ENCODE measurements at regions of chr7 and their contacts with region 1.

Region 1: DNA sequence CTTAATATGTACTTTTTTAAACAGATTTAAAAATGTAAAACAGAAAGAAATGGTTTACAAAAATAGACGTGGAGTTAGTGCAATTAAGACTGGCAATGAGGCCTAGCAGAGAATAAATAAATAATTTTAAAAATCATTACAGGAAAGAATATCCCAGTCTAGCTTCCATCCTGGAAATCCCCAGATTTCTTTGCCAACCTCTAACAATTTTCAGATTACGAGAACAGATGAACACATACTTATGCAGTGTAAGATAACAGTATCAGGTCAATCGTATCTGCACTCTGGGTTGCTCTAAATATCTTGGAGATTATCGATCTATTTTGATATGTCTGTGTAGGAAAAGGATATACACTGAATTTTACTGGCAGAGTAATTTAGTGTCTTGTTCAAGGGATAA is 210.5 kb downstream of the SEMA3A start:
- DNase-seq: no peak
- ATAC-seq: no peak
- H3K4me3 ChIP-seq: no peak overlapping the region
- H3K27ac ChIP-seq: no peak overlapping the region
- H3K4me1 ChIP-seq: no peaks in the 10 kb centered on the region
- H3K27me3 ChIP-seq: no peaks in the 10 kb centered on the region

Region 2: DNA sequence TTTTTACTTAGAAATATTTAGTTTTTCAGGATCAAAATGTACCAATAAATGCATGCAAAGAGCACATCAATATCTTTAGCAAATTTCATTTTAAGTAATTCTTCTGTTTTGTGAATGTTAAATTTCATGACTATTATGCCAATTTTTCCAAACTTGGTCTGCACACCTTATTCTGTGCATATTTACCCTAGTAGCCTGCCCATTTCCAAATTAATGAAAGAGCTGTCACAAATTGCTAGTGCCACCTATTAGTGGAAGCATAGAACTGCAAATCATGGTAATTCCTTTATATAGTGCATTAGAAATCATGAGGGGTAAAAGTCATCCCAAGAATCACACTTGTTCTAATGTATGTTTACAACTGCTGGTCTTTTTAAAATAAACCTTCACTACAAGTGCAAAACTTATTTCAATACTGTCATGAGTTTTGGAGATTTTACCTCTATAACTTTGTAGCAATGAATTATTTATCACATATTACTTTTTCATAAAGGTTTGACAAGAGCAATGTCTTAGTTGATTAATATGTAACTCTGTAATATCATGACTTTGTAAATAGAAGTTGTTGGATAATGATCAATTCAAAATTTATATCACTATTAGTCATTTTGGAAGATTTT is 204.8 kb after region 1 on chr7:
- intact Hi-C with region 1: loop called in 3 of 4 experiments (anchors 5 to 10 kb)
- DNase-seq: no peak
- ATAC-seq: peak in 1 of 2 donors; percentile 42
- H3K4me3 ChIP-seq: no peak overlapping the region
- H3K27ac ChIP-seq: no peak overlapping the region
- H3K4me1 ChIP-seq: no peaks in the 10 kb centered on the region
- H3K27me3 ChIP-seq: no peaks in the 10 kb centered on the region

Measured in right cardiac atrium (tissue), 5 donors.